ENCODE measurements at regions of chr15 and their contacts with region 1.

Region 1: GRCh38 chr15:77633134-77633912 is 611 bp upstream of the LINGO1 start:
- DNase-seq: peak; percentile 93

Region 2: GRCh38 chr15:77118882-77119321 is 514.4 kb before region 1 on chr15:
- intact Hi-C with region 1: loop called (anchors 5 kb)
- DNase-seq: no peak

Region 3: DNA sequence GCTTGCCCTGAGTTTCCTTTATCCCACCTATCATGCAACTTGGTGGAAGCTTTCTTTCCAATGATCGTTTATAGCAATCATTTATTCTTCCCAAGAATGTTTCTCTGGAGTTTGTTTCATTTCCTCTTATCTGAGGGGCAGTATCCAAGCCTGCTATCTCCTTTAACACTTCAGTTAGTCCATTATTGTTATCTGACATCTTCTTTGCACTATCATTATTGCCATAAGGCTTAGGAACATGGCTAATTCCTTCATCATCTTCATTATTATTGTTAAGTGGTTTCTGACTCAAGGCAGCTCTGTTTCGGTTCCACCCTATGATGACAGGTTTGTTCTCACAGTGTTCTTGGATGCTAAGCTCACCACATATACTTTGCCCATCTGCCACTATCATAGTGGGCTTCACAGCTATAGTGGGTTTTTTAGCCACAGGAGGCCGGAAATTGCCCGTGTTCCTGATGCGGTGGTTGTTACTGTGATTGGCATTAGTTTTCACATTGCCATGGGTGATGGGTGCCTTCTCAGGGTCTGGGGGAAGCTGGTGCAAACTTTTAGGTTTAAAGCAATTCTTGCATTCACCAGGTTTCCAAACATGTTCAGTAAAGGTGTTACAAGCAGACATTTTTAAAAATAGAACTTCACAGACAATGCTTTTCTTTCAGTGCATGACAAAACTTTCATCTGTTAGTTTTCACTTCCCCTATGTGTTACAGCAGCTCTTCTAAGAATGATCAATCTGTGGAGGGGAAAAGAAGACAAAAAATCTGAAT is 451.8 kb before region 1 on chr15:
- intact Hi-C with region 1: loop called (anchors 5 kb)
- DNase-seq: no peak

Region 4: DNA sequence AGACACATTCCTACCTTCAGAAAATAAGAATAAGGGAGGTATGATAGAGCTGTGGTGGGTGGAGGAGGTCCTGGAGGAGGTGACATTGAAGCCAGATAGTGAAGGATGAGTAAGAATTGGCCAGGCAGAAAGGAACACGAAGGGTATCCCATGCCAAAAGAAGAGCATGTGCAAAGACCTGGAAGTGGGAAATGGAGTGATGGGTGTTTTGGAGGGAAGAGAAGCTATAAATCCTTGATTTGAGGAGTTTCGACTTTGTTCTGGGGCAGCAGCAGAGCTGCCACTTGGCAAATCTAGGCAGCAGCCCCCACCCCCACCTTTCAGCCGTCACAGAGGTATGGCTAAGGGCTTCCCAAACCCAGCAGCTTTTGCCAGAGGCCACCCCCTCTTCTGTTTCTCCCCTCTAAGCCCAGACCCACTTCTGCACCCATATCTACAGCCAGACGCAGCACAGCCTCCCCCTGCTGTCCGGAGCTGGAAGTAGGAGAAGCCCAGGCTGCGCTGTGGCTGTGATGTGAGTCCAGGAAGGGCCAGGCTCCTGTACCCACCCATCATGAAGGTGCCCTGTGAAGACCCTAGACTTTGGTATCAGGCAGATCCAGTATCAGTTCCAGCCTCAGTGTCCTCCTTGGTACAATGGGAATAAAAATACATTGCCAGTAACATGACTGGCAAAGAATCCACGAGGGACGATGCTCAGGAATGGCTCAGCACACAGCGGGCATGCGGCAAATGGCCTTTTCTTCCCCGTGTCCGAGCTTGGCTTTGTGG is 188.1 kb after region 1 on chr15:
- intact Hi-C with region 1: loop called (anchors 1 kb)
- DNase-seq: no peak

Region 5: GRCh38 chr15:78093242-78094020 is 460.1 kb after region 1 on chr15:
- intact Hi-C with region 1: no loop called
- DNase-seq: no peak